ENCODE measurements at regions of chr4 and their contacts with region 1.

Region 1: DNA sequence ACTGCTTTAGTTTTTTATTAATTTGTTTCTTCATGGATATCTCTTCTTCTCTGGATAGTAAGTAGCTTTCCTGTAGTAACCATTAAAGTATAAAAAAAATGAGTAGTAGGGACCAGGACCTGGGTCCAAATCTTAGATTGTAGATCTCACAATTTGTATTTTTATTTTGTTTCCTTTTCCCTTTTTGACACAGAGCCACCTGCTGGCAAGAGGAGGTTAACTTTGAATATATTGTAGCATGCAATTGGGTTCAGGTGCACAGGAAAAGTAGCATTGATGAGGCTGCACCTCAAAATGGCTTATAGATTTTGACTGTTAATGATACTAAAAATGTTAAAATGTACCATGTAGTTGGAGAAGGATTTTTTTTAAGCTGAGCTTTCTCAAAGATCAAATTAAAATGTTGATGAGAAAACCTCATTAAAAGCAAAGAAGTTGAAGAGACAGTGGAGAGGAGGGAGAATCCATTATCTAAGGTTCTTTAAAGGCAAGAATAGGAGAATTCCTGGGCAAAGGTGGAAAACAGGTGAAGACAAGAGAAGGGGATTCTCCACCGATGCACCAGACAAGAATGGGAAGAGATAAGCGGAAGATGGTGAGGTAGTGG is 48.3 kb upstream of the HPGDS start:
- DNase-seq: peak; percentile 22
- H3K4me3 Mint-ChIP-seq: no peak overlapping the region
- H3K27ac Mint-ChIP-seq: no peak overlapping the region
- H3K4me1 Mint-ChIP-seq: no peaks in the 10 kb centered on the region
- H3K27me3 Mint-ChIP-seq: peaks cover 24% of the 10 kb centered on the region
- CTCF ChIP-seq: peak; percentile 29

Region 2: DNA sequence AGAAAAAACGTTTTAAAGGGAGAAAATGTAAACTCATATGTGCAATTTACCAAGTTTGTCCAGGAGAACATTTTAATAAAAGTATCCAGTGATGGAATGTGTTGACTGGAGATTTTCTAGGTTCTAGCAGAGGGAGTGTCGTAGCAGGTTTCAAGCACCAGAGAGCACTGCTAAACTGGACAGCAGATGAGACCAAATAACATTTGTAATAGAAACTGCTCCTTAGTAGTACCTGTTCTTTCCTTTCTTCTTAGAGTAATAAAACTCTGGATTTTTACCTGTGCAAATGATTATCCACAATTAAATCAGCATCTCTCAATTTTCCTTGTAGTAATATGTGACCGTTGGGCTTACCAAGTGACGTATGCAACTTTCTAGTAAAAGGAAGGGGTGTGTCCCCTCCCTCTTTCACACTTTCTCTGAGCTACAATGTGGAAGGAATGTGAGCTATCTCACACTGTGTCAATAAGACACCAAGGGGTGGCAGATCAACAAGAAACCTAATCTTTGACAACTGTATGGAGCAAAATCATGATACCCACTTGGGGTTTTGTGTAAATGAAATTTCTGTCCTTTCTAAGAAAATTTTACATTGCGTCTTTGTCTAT is 57.8 kb before region 1 on chr4:
- CTCF ChIA-PET with region 1: no interaction called
- intact Hi-C with region 1: loop called (anchors 1 kb)
- DNase-seq: peak; percentile 13
- H3K4me3 Mint-ChIP-seq: no peak overlapping the region
- H3K27ac Mint-ChIP-seq: no peak overlapping the region
- H3K4me1 Mint-ChIP-seq: peaks cover 8% of the 10 kb centered on the region
- H3K27me3 Mint-ChIP-seq: no peaks in the 10 kb centered on the region
- CTCF ChIP-seq: no peak

Measured in Calu3 (cell line).